Mucosa of descending colon (tissue), 3 donors: ENCODE measurements at regions of chr4 and their contacts with region 1.

Region 1: GRCh38 chr4:89024051-89024675 is 32.8 kb downstream of the FAM13A start:
- DNase-seq: peak in 1 of 3 donors; percentile 88
- ATAC-seq: peak; percentile 97
- H3K4me3 ChIP-seq: no peak overlapping the region
- H3K4me1 ChIP-seq: no peaks in the 10 kb centered on the region
- CTCF ChIP-seq: peak; percentile 59

Region 2: GRCh38 chr4:88523325-88524129 is 500.6 kb before region 1 on chr4 and contains the start of gene PYURF:
- intact Hi-C with region 1: loop called in 1 of 2 experiments (anchors 10 kb)
- DNase-seq: peak; percentile 96 to 97 (median 96)
- ATAC-seq: peak; percentile 99
- H3K4me3 ChIP-seq: peak within 1 kb of the TSS; percentile 79
- H3K4me1 ChIP-seq: peaks cover 12% of the 10 kb centered on the region
- CTCF ChIP-seq: no peak
- total RNA-seq, gene PYURF: 41.3 to 62.7 (median 53.2) TPM

Region 3: GRCh38 chr4:88706574-88706973 is 317.6 kb before region 1 on chr4:
- intact Hi-C with region 1: loop called in 1 of 2 experiments (anchors 10 kb)
- DNase-seq: no peak
- ATAC-seq: no peak
- H3K4me3 ChIP-seq: no peak overlapping the region
- H3K4me1 ChIP-seq: no peaks in the 10 kb centered on the region
- CTCF ChIP-seq: no peak

Region 4: GRCh38 chr4:88818631-88819470 is 205.3 kb before region 1 on chr4:
- intact Hi-C with region 1: loop called (anchors 2 to 5 kb)
- DNase-seq: peak in 2 of 3 donors; percentile 62 to 79
- ATAC-seq: peak; percentile 31
- H3K4me3 ChIP-seq: no peak overlapping the region
- H3K4me1 ChIP-seq: peaks cover 16% of the 10 kb centered on the region
- CTCF ChIP-seq: no peak

Region 5: DNA sequence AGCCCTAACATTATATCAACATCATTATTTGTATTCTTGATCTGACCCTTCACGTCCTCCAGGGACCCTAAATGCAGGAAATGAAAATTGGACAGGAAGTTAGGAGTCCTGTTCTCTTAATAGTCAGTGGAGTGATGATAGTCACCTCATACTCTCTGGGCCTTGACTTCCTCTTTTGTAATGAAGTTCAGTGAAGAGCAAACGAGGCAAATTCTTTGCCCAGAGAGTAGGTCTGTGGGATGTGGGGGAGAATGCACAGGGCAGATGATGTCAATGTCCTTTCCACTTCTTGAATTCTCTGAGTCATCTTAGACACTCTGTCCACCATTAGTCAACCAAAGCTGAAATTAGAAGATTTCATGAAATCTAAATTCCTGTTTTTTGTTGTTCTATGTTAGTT is 300.5 kb after region 1 on chr4:
- intact Hi-C with region 1: no loop called
- DNase-seq: no peak
- ATAC-seq: peak; percentile 64
- H3K4me3 ChIP-seq: no peak overlapping the region
- H3K4me1 ChIP-seq: no peaks in the 10 kb centered on the region
- CTCF ChIP-seq: no peak